ENCODE measurements at regions of chr7 and their contacts with region 1.

Region 1: GRCh38 chr7:12683669-12684580 is 3.5 kb upstream of the ARL4A start:
- DNase-seq: no peak
- H3K4me3 ChIP-seq: no peak overlapping the region
- H3K27ac ChIP-seq: peak overlapping the region in 1 of 2 donors; percentile 25
- H3K4me1 ChIP-seq: peaks cover 0 to 4% of the 10 kb centered on the region in 2 donors
- H3K27me3 ChIP-seq: no peaks in the 10 kb centered on the region
- CTCF ChIP-seq: peak in 1 of 3 donors; percentile 31
- POLR2A ChIP-seq: no peak

Region 2: DNA sequence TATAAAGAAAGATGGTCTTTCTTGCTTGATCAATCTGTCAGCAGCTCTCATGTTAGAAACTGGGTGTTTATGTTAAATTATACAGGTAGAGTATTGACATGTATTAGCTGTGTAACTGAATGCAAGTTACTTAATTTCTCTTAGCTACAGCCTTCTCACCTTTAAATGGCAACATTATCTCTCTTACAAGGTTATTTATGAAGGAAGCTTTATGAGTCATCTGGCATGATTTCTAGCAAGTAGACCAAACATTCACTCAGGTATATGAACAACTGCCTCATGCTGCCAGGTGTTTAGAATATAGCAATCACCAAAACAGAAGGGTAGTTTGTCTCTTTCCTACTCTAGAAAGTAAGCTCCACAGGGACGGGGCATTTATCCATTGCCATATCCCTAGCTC is 12.0 kb after region 1 on chr7:
- intact Hi-C with region 1: no loop called
- DNase-seq: no peak
- H3K4me3 ChIP-seq: no peak overlapping the region
- H3K27ac ChIP-seq: peak overlapping the region; percentile 33 to 62
- H3K4me1 ChIP-seq: no peaks in the 10 kb centered on the region
- H3K27me3 ChIP-seq: no peaks in the 10 kb centered on the region
- CTCF ChIP-seq: no peak
- POLR2A ChIP-seq: no peak

Region 3: GRCh38 chr7:13262929-13263530 is 579.1 kb after region 1 on chr7:
- intact Hi-C with region 1: loop called (anchors 5 kb)
- DNase-seq: no peak
- H3K4me3 ChIP-seq: no peak overlapping the region
- H3K27ac ChIP-seq: no peak overlapping the region
- H3K4me1 ChIP-seq: no peaks in the 10 kb centered on the region
- H3K27me3 ChIP-seq: no peaks in the 10 kb centered on the region
- CTCF ChIP-seq: peak; percentile 46 to 68 (median 65)
- POLR2A ChIP-seq: no peak